Activated CD4-positive, alpha-beta memory T cell treated with anti-CD3 and anti-CD28 coated beads, Interleukin-2, amount 10 ng/mL, durations not matched to agents 7 days and 5 days (primary cell): ENCODE measurements at regions of chr5 and their contacts with region 1.

Region 1: GRCh38 chr5:57499262-57500050 is 16.8 kb upstream of the ACTBL2 start:
- DNase-seq: peak; percentile 24
- H3K4me3 Mint-ChIP-seq: peak overlapping the region; percentile 49
- H3K27ac Mint-ChIP-seq: peak overlapping the region; percentile 41
- H3K4me1 Mint-ChIP-seq: peaks cover 31% of the 10 kb centered on the region
- H3K27me3 Mint-ChIP-seq: peaks cover 2% of the 10 kb centered on the region

Region 2: GRCh38 chr5:57513785-57514184 is 14.3 kb after region 1 on chr5:
- CTCF ChIA-PET with region 1: interaction called, 11 read pairs
- POLR2A ChIA-PET with region 1: no interaction called
- DNase-seq: no peak
- H3K4me3 Mint-ChIP-seq: no peak overlapping the region
- H3K27ac Mint-ChIP-seq: no peak overlapping the region
- H3K4me1 Mint-ChIP-seq: no peaks in the 10 kb centered on the region
- H3K27me3 Mint-ChIP-seq: peaks cover 16% of the 10 kb centered on the region